Transverse colon (tissue), 4 donors: ENCODE measurements at regions of chr7 and their contacts with region 1.

Region 1: GRCh38 chr7:129468087-129468486 is 33.9 kb downstream of the STRIP2 start:
- DNase-seq: no peak
- H3K4me3 ChIP-seq: no peak overlapping the region
- H3K27ac ChIP-seq: no peak overlapping the region
- H3K4me1 ChIP-seq: peaks cover 0 to 5% (median 0%) of the 10 kb centered on the region in 4 donors
- H3K27me3 ChIP-seq: no peaks in the 10 kb centered on the region
- CTCF ChIP-seq: no peak
- EP300 ChIP-seq: no peak
- POLR2A ChIP-seq: no peak

Region 2: GRCh38 chr7:129224251-129225205 is 243.6 kb before region 1 on chr7 and contains the start of gene AHCYL2:
- in situ Hi-C with region 1: loop called in 3 of 4 experiments (anchors 25 kb)
- intact Hi-C with region 1: no loop called
- DNase-seq: peak; percentile 99
- H3K4me3 ChIP-seq: peak within 1 kb of the TSS; percentile 55 to 96 (median 85)
- H3K27ac ChIP-seq: peak within 1 kb of the TSS; percentile 92 to 95 (median 95)
- H3K4me1 ChIP-seq: peaks cover 11 to 37% (median 17%) of the 10 kb centered on the region in 4 donors
- H3K27me3 ChIP-seq: no peaks in the 10 kb centered on the region
- CTCF ChIP-seq: no peak
- EP300 ChIP-seq: no peak
- POLR2A ChIP-seq: peak; percentile 50
- total RNA-seq, gene AHCYL2: 93.7 to 635 (median 551) TPM

Region 3: GRCh38 chr7:129367700-129368388 is 100.2 kb before region 1 on chr7:
- in situ Hi-C with region 1: loop called in 3 of 4 experiments (anchors 10 to 25 kb)
- intact Hi-C with region 1: loop called (anchors 5 kb)
- DNase-seq: peak; percentile 88
- H3K4me3 ChIP-seq: peak overlapping the region in 3 of 4 donors; percentile 30 to 51 (median 36)
- H3K27ac ChIP-seq: peak overlapping the region; percentile 83 to 89 (median 84)
- H3K4me1 ChIP-seq: peaks cover 3 to 34% (median 19%) of the 10 kb centered on the region in 4 donors
- H3K27me3 ChIP-seq: no peaks in the 10 kb centered on the region
- CTCF ChIP-seq: peak; percentile 82 to 92 (median 86)
- EP300 ChIP-seq: no peak
- POLR2A ChIP-seq: peak; percentile 97

Region 4: DNA sequence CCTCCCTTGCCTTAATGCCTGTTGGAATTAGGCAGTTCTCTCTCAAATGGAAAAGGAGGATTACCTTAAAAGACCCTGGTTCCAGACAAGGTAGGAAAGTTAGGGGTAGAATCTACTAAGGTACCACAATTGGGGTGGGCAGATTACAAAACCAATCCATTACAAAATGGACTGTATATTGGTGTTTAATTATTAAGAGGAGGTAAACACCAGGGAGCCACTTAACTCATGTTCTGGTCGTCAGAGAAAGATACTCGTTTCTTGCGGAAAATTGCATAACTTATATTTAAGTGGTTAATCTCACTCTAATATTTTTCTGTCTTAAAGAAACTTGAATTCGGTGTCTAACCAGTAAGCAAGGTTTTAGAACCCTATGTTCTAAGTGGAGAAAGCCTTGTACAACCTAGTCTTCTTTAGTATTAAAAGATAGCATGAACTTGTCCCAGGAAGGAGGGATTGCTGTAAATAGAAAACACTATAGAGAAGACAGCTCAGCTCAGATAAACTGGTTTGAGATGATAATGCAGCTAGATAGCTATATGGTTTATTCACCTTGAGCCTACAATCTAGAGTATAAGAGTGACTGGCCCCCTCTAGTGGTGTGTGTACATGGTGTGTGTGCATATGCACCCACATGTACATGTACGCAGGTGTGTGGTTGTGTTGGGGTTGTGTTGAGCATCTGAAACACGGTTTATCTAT is 91.9 kb before region 1 on chr7:
- in situ Hi-C with region 1: loop called in 3 of 4 experiments (anchors 10 to 25 kb)
- intact Hi-C with region 1: no loop called
- DNase-seq: peak; percentile 69
- H3K4me3 ChIP-seq: no peak overlapping the region
- H3K27ac ChIP-seq: no peak overlapping the region
- H3K4me1 ChIP-seq: peaks cover 0 to 24% (median 10%) of the 10 kb centered on the region in 4 donors
- H3K27me3 ChIP-seq: no peaks in the 10 kb centered on the region
- CTCF ChIP-seq: peak; percentile 53 to 65 (median 62)
- EP300 ChIP-seq: no peak
- POLR2A ChIP-seq: no peak